ENCODE measurements at regions of chr1 and their contacts with region 1.

Region 1: GRCh38 chr1:32013386-32014198 is at the start of gene KHDRBS1:
- DNase-seq: peak; percentile 99
- ATAC-seq: peak; percentile 86
- H3K4me3 ChIP-seq: peak within 1 kb of the TSS; percentile 60 to 96 (median 85)
- H3K4me3 Mint-ChIP-seq: peak within 1 kb of the TSS; percentile 99
- H3K27ac ChIP-seq: peak within 1 kb of the TSS; percentile 89 to 96
- H3K27ac Mint-ChIP-seq: peak within 1 kb of the TSS; percentile 99
- H3K4me1 ChIP-seq: peaks cover 20 to 33% of the 10 kb centered on the region in 2 donors
- H3K4me1 Mint-ChIP-seq: peaks cover 31% of the 10 kb centered on the region
- H3K27me3 ChIP-seq: no peaks in the 10 kb centered on the region
- H3K27me3 Mint-ChIP-seq: no peaks in the 10 kb centered on the region
- CTCF ChIP-seq: no peak
- total RNA-seq, gene KHDRBS1: 99.0 and 101 TPM in 2 replicates

Region 2: GRCh38 chr1:31102484-31102950 is 911.1 kb before region 1 on chr1:
- CTCF ChIA-PET with region 1: no interaction called
- POLR2A ChIA-PET with region 1: no interaction called
- intact Hi-C with region 1: no loop called
- DNase-seq: no peak
- ATAC-seq: no peak
- H3K4me3 ChIP-seq: no peak overlapping the region
- H3K4me3 Mint-ChIP-seq: no peak overlapping the region
- H3K27ac ChIP-seq: no peak overlapping the region
- H3K27ac Mint-ChIP-seq: no peak overlapping the region
- H3K4me1 ChIP-seq: no peaks in the 10 kb centered on the region
- H3K4me1 Mint-ChIP-seq: no peaks in the 10 kb centered on the region
- H3K27me3 ChIP-seq: no peaks in the 10 kb centered on the region
- H3K27me3 Mint-ChIP-seq: no peaks in the 10 kb centered on the region
- CTCF ChIP-seq: no peak

Region 3: GRCh38 chr1:31644560-31645273 is 368.9 kb before region 1 on chr1 and contains the start of gene PEF1:
- CTCF ChIA-PET with region 1: no interaction called
- POLR2A ChIA-PET with region 1: no interaction called
- intact Hi-C with region 1: loop called (anchors 2 kb)
- DNase-seq: peak; percentile 100
- ATAC-seq: peak; percentile 93
- H3K4me3 ChIP-seq: peak within 1 kb of the TSS; percentile 70 to 98 (median 95)
- H3K4me3 Mint-ChIP-seq: peak within 1 kb of the TSS; percentile 98
- H3K27ac ChIP-seq: peak within 1 kb of the TSS; percentile 98 to 99
- H3K27ac Mint-ChIP-seq: peak within 1 kb of the TSS; percentile 99
- H3K4me1 ChIP-seq: peaks cover 17 to 19% of the 10 kb centered on the region in 2 donors
- H3K4me1 Mint-ChIP-seq: peaks cover 31% of the 10 kb centered on the region
- H3K27me3 ChIP-seq: no peaks in the 10 kb centered on the region
- H3K27me3 Mint-ChIP-seq: no peaks in the 10 kb centered on the region
- CTCF ChIP-seq: no peak
- total RNA-seq, gene PEF1: 36.7 and 46.9 TPM in 2 replicates

Region 4: GRCh38 chr1:31762726-31763670 is 250.6 kb before region 1 on chr1:
- CTCF ChIA-PET with region 1: no interaction called
- POLR2A ChIA-PET with region 1: no interaction called
- intact Hi-C with region 1: no loop called
- DNase-seq: peak; percentile 83
- ATAC-seq: peak; percentile 56
- H3K4me3 ChIP-seq: peak overlapping the region in 4 of 5 experiments; percentile 33 to 61 (median 50)
- H3K4me3 Mint-ChIP-seq: peak overlapping the region; percentile 83
- H3K27ac ChIP-seq: no peak overlapping the region
- H3K27ac Mint-ChIP-seq: peak overlapping the region; percentile 15
- H3K4me1 ChIP-seq: peaks cover 35 to 42% of the 10 kb centered on the region in 2 donors
- H3K4me1 Mint-ChIP-seq: peaks cover 34% of the 10 kb centered on the region
- H3K27me3 ChIP-seq: peaks cover 0 to 31% (median 15%) of the 10 kb centered on the region in 4 experiments
- H3K27me3 Mint-ChIP-seq: peaks cover 13% of the 10 kb centered on the region
- CTCF ChIP-seq: peak; percentile 80

Region 5: DNA sequence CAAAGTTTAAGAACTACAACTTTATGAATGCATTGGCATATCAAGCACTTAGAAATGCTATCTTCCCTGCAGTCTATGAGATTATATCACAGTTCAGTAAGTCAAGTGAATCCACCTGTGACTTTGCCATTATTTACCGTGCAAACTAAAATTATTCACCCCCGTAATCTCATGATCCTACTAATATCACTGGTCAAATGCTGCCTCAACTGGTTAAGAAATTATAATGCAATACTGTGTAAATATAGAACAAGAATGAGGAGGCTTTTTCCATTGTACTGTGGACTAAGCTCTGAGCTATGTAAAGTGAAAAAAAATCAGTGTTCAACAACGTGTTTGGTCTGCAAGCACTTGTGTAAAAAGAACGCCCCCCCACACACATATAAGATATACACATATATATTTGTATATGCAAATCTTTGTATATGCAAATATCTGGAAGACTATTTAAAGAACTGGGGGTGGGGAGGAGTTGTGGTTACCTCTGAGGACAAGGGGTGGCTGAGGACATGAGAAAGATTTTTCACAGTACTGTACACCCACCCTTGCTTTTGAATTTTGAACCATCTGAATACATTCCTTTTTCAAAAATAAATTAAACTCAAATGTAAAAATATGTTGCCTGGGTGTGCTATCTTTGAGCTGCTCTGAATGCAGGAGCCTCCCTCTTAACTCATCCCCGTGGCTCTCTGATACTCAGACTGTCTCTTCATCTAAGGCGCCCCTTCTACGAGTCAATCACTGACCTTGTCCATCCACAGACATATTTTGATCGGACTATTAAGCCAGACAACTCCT is 132.5 kb before region 1 on chr1:
- CTCF ChIA-PET with region 1: no interaction called
- POLR2A ChIA-PET with region 1: no interaction called
- intact Hi-C with region 1: no loop called
- DNase-seq: peak; percentile 57
- ATAC-seq: peak; percentile 61
- H3K4me3 ChIP-seq: peak overlapping the region in 3 of 5 experiments; percentile 13 to 34 (median 20)
- H3K4me3 Mint-ChIP-seq: peak overlapping the region; percentile 68
- H3K27ac ChIP-seq: no peak overlapping the region
- H3K27ac Mint-ChIP-seq: peak overlapping the region; percentile 33
- H3K4me1 ChIP-seq: peaks cover 37 to 48% of the 10 kb centered on the region in 2 donors
- H3K4me1 Mint-ChIP-seq: peaks cover 43% of the 10 kb centered on the region
- H3K27me3 ChIP-seq: no peaks in the 10 kb centered on the region
- H3K27me3 Mint-ChIP-seq: no peaks in the 10 kb centered on the region
- CTCF ChIP-seq: no peak

Region 6: DNA sequence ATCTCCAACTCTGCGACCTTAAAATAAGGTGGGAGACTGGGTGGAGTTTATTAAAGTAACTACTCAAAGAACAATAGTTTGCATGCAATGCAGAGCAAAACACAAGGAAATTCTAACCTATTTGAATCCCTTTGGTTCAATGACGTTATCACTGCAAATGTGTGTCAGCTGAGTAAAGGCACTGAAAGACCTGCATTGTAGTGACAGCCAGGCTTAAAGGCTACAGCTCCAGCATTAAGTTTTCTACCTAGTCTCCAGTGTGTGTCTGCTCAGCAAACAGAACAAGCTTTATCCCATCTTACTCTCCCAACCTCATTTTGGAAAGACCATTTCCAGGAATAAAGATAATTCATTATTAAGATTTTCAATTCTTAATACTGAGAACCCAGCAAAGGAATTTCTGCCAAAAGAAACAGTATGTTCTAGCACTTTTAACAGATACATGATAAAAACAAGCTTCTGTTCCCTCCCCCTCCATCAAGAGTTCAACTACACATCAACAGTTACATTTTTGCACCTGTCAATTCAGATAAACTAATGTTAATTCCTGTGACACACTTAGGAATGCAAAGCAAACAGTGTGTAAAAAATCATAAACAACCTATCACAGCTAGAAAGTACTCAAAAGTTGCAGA is 89.6 kb before region 1 on chr1:
- CTCF ChIA-PET with region 1: no interaction called
- POLR2A ChIA-PET with region 1: interaction called, 11 read pairs
- intact Hi-C with region 1: no loop called
- DNase-seq: no peak
- ATAC-seq: no peak
- H3K4me3 ChIP-seq: no peak overlapping the region
- H3K4me3 Mint-ChIP-seq: peak overlapping the region; percentile 19
- H3K27ac ChIP-seq: peak overlapping the region in 1 of 2 donors; percentile 18
- H3K27ac Mint-ChIP-seq: peak overlapping the region; percentile 67
- H3K4me1 ChIP-seq: peaks cover 57 to 71% of the 10 kb centered on the region in 2 donors
- H3K4me1 Mint-ChIP-seq: peaks cover 76% of the 10 kb centered on the region
- H3K27me3 ChIP-seq: no peaks in the 10 kb centered on the region
- H3K27me3 Mint-ChIP-seq: no peaks in the 10 kb centered on the region
- CTCF ChIP-seq: no peak

Region 7: GRCh38 chr1:31995263-31995662 is 18.3 kb before region 1 on chr1:
- CTCF ChIA-PET with region 1: no interaction called
- POLR2A ChIA-PET with region 1: no interaction called
- intact Hi-C with region 1: no loop called
- DNase-seq: no peak
- ATAC-seq: no peak
- H3K4me3 ChIP-seq: no peak overlapping the region
- H3K4me3 Mint-ChIP-seq: no peak overlapping the region
- H3K27ac ChIP-seq: no peak overlapping the region
- H3K27ac Mint-ChIP-seq: no peak overlapping the region
- H3K4me1 ChIP-seq: no peaks in the 10 kb centered on the region
- H3K4me1 Mint-ChIP-seq: no peaks in the 10 kb centered on the region
- H3K27me3 ChIP-seq: no peaks in the 10 kb centered on the region
- H3K27me3 Mint-ChIP-seq: no peaks in the 10 kb centered on the region
- CTCF ChIP-seq: no peak

Region 8: DNA sequence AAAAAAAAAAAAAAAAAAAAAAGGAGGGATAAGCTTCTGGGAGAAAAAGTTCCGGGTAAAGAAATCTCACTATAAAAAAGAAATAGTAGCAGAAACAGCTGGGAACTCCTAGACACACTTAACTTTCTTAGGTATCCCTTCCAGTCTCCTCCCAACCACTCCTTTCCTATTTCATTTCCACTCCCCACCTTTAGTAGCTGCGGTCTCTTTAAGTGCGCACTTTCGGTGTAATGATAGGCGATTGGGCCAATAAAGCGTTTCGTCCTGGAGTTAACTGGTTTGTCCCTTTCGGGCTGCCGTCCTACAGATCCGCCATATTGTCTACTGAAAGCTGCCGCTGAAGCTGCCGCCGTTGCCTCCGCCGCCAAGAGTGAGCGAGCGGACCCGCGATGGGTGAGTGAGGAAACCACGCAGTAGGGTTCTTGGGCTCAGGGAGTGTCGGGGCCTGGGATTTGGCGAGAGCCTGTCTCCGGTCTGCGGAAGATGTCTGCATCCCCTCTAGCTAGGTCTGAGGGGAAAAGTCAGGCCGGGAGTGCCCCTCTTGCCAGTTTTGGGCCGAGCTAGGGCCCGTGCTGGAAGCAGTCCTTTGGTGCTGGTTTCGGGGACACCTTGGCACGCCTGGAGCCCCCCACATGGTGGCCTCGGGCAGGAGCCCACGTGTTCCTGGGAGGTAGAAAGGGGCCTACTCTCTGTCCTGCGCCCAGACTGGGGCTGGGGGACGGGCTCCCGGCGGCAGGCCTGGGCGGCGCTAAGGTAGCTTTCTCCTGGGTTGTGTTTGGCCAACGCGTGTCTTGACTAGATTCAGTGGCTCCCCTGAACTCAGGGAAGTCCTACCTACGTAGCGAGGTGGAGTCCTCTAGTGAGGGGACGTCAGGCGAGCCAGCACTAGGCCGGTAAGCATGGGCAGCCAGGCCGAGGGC is 94.4 kb after region 1 on chr1 and contains the start of gene KPNA6:
- CTCF ChIA-PET with region 1: interaction called, 4 read pairs
- POLR2A ChIA-PET with region 1: no interaction called
- intact Hi-C with region 1: loop called (anchors 2 kb)
- DNase-seq: peak; percentile 96
- ATAC-seq: peak; percentile 83
- H3K4me3 ChIP-seq: peak within 1 kb of the TSS; percentile 86 to 99 (median 93)
- H3K4me3 Mint-ChIP-seq: peak within 1 kb of the TSS; percentile 100
- H3K27ac ChIP-seq: peak within 1 kb of the TSS; percentile 86 to 88
- H3K27ac Mint-ChIP-seq: peak within 1 kb of the TSS; percentile 100
- H3K4me1 ChIP-seq: peaks cover 33 to 44% of the 10 kb centered on the region in 2 donors
- H3K4me1 Mint-ChIP-seq: peaks cover 44% of the 10 kb centered on the region
- H3K27me3 ChIP-seq: no peaks in the 10 kb centered on the region
- H3K27me3 Mint-ChIP-seq: no peaks in the 10 kb centered on the region
- CTCF ChIP-seq: no peak
- total RNA-seq, gene KPNA6: 49.9 and 54.8 TPM in 2 replicates

Region 9: GRCh38 chr1:32394141-32394889 is 380.7 kb after region 1 on chr1 and contains the start of gene BSDC1:
- CTCF ChIA-PET with region 1: interaction called, 3 read pairs
- POLR2A ChIA-PET with region 1: no interaction called
- intact Hi-C with region 1: loop called (anchors 1 kb)
- DNase-seq: peak; percentile 99
- ATAC-seq: peak; percentile 99
- H3K4me3 ChIP-seq: peak within 1 kb of the TSS; percentile 66 to 94 (median 84)
- H3K4me3 Mint-ChIP-seq: peak within 1 kb of the TSS; percentile 99
- H3K27ac ChIP-seq: peak within 1 kb of the TSS; percentile 91
- H3K27ac Mint-ChIP-seq: peak within 1 kb of the TSS; percentile 99
- H3K4me1 ChIP-seq: peaks cover 14 to 27% of the 10 kb centered on the region in 2 donors
- H3K4me1 Mint-ChIP-seq: peaks cover 31% of the 10 kb centered on the region
- H3K27me3 ChIP-seq: no peaks in the 10 kb centered on the region
- H3K27me3 Mint-ChIP-seq: peaks cover 3% of the 10 kb centered on the region
- CTCF ChIP-seq: no peak
- total RNA-seq, gene BSDC1: 117 and 124 TPM in 2 replicates

Region 10: DNA sequence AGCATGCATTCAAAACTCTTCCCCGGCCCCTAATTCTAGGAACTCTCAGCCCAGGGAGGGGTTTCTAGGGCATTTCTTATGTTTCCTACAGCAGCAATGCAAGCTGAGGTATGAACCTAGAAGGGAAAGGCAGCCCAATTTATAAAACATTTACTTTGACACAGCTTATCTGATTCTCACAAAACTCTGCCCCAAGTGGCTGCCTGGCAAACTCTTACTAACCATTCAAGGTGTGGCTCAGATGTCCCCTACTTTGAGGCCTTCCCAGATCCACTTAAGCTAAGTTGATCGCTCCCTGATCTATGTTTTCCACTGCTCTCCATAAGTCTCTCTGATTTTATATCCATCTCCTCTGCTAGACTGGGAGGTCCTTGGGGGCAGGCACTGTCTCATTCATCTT is 987.7 kb after region 1 on chr1:
- CTCF ChIA-PET with region 1: no interaction called
- POLR2A ChIA-PET with region 1: interaction called, 24 read pairs
- intact Hi-C with region 1: no loop called
- DNase-seq: no peak
- ATAC-seq: no peak
- H3K4me3 ChIP-seq: no peak overlapping the region
- H3K4me3 Mint-ChIP-seq: no peak overlapping the region
- H3K27ac ChIP-seq: no peak overlapping the region
- H3K27ac Mint-ChIP-seq: no peak overlapping the region
- H3K4me1 ChIP-seq: peaks cover 6 to 11% of the 10 kb centered on the region in 2 donors
- H3K4me1 Mint-ChIP-seq: peaks cover 20% of the 10 kb centered on the region
- H3K27me3 ChIP-seq: no peaks in the 10 kb centered on the region
- H3K27me3 Mint-ChIP-seq: no peaks in the 10 kb centered on the region
- CTCF ChIP-seq: no peak

Measured in B cell (primary cell).